Naive thymus-derived CD4-positive, alpha-beta T cell (primary cell): ENCODE measurements at regions of chr19 and their contacts with region 1.

Region 1: DNA sequence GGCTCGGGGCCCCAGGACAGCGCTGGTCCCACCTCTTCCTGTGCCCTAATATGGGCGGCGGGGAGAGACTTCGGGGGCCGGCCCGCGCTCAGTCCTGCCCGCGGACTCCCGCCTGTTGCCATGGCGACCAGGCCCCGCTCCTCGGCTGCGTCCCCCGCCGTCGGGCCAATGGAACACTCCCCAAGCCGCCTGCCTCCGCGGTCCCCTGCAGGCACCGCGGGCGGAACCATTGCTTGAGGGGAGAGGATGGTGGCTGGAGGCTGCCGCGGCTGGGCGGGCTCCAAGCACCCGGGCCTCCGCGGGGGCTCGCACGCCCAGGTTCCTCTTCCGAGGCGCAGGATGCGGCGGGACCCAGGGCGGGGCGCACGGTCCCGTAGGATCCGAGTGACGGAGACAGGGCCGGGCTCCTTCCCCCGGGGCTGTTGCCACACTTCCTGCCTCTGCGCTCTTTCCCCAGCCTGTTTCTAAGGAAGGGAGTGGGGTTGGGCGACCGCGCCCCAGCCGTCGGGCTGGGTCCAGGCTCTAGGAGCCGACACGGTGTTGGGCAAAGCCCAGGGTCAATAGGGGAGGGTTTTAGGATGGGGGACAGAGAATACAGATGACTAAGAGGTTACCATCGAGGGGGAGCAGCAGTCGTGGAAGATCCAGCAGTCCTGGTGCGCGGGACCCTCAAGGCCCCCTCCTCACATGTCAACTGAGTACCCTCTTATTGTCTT is 1.2 kb upstream of the JUNB start:
- DNase-seq: peak; percentile 80 to 97 (median 83)
- ATAC-seq: peak; percentile 48
- H3K4me3 ChIP-seq: peak overlapping the region; percentile 98
- H3K4me3 Mint-ChIP-seq: peak overlapping the region; percentile 89 to 98 (median 94)
- H3K27ac ChIP-seq: peak overlapping the region; percentile 99
- H3K27ac Mint-ChIP-seq: peak overlapping the region; percentile 97 to 100 (median 100)
- H3K4me1 ChIP-seq: peaks cover 42% of the 10 kb centered on the region in 2 donors
- H3K4me1 Mint-ChIP-seq: peaks cover 19 to 37% (median 30%) of the 10 kb centered on the region in 7 donors
- H3K27me3 ChIP-seq: no peaks in the 10 kb centered on the region
- H3K27me3 Mint-ChIP-seq: peaks cover 0 to 2% (median 0%) of the 10 kb centered on the region in 5 donors

Region 2: DNA sequence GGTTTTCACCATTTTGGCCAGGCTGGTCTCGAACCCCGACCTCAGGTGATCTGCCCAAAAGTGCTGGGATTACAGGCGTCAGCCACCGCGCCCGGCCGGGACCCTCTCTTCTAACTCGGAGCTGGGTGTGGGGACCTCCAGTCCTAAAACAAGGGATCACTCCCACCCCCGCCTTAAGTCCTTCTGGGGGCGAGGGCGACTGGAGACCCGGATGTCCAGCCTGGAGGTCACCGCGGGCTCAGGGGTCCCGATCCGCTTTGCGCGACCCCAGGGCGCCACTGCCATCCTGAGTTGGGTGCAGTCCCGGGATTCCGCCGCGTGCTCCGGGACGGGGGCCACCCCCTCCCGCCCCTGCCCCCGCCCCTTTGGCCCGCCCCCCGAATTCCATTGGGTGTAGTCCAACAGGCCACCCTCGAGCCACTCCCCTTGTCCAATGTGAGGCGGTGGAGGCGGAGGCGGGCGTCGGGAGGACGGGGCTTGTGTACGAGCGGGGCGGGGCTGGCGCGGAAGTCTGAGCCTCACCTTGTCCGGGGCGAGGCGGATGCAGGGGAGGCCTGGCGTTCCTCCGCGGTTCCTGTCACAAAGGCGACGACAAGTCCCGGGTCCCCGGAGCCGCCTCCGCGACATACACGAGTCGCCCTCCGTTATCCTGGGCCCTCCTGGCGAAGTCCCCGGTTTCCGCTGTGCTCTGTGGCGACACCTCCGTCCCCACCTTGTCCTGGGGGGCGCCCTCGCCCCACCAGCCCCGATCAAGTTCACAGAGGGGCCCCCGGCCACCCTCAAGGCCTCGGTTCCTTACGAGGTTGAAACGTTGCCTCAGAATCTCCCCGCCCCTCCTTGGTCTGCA is 1699.8 kb before region 1 on chr19:
- CTCF ChIA-PET with region 1: no interaction called
- POLR2A ChIA-PET with region 1: no interaction called
- intact Hi-C with region 1: loop called in 1 of 2 experiments (anchors 5 kb)
- DNase-seq: peak; percentile 89 to 97 (median 96)
- ATAC-seq: peak; percentile 90
- H3K4me3 ChIP-seq: peak overlapping the region; percentile 83
- H3K4me3 Mint-ChIP-seq: peak overlapping the region; percentile 85 to 94 (median 89)
- H3K27ac ChIP-seq: peak overlapping the region; percentile 91
- H3K27ac Mint-ChIP-seq: peak overlapping the region; percentile 88 to 99 (median 96)
- H3K4me1 ChIP-seq: peaks cover 24 to 41% of the 10 kb centered on the region in 2 donors
- H3K4me1 Mint-ChIP-seq: peaks cover 13 to 51% (median 44%) of the 10 kb centered on the region in 7 donors
- H3K27me3 ChIP-seq: no peaks in the 10 kb centered on the region
- H3K27me3 Mint-ChIP-seq: peaks cover 0 to 2% (median 0%) of the 10 kb centered on the region in 5 donors

Region 3: DNA sequence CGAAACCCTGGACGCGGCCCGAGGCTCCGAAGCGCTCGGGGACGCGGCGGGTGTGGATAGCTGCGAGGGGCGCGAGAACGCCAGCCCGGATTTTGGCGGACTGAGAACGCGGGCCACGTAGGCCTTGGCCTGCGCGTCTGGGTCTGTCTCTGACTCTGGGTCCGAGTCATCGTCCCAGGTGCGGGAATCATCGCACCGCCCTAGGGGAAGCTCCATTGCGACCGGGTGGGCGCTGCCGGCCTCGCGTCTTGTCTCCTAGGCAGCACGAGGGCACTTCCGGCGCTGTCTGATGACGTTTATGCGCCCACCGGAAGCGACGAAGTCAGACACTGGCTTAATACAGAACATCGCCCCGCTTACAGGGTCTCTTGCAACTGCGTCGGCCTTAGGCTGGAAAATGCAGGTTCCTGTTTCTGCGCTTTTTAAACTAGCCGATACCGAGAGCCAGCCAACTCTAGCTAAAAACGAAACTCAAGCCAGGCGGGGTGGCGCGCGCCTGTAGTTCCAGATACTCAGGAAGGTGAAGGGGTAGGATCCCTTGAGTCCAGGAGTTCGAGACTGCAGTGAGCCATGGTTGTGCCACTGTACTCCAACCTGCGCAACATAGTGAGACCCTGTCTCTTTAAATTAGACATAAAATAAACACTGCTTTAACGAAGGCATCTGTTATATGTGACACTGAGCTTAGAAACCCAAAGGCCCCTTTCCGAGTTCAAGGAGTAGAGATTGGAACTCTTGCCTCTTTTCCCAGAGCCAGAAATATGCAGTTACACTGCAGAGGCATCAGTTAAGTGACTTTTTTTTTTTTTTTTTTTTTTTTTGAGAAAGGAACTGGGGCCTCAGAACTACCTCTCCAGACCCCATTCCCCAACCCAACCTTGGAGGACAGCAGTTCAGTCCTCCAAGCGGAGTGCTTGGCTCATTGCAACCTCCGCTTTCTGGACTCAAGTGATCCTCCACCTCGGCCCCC is 93.4 kb before region 1 on chr19 and contains the start of gene FBXW9:
- CTCF ChIA-PET with region 1: no interaction called
- POLR2A ChIA-PET with region 1: interaction called, 12 read pairs
- intact Hi-C with region 1: no loop called
- DNase-seq: peak; percentile 88 to 97 (median 95)
- ATAC-seq: peak; percentile 97
- H3K4me3 ChIP-seq: peak within 1 kb of the TSS; percentile 98
- H3K4me3 Mint-ChIP-seq: peak within 1 kb of the TSS; percentile 86 to 95 (median 91)
- H3K27ac ChIP-seq: peak within 1 kb of the TSS; percentile 82
- H3K27ac Mint-ChIP-seq: peak within 1 kb of the TSS; percentile 90 to 97 (median 97)
- H3K4me1 ChIP-seq: peaks cover 9 to 11% of the 10 kb centered on the region in 2 donors
- H3K4me1 Mint-ChIP-seq: peaks cover 0 to 15% (median 12%) of the 10 kb centered on the region in 7 donors
- H3K27me3 ChIP-seq: no peaks in the 10 kb centered on the region
- H3K27me3 Mint-ChIP-seq: no peaks in the 10 kb centered on the region
- total RNA-seq, gene FBXW9: 2.5 to 8.6 (median 4.3) TPM

Region 4: GRCh38 chr19:12749938-12750521 is 40.0 kb before region 1 on chr19:
- CTCF ChIA-PET with region 1: no interaction called
- POLR2A ChIA-PET with region 1: no interaction called
- intact Hi-C with region 1: no loop called
- DNase-seq: no peak
- ATAC-seq: no peak
- H3K4me3 ChIP-seq: no peak overlapping the region
- H3K4me3 Mint-ChIP-seq: peak overlapping the region in 3 of 10 donors; percentile 2 to 48 (median 21)
- H3K27ac ChIP-seq: no peak overlapping the region
- H3K27ac Mint-ChIP-seq: no peak overlapping the region
- H3K4me1 ChIP-seq: no peaks in the 10 kb centered on the region
- H3K4me1 Mint-ChIP-seq: peaks cover 0 to 13% (median 4%) of the 10 kb centered on the region in 7 donors
- H3K27me3 ChIP-seq: no peaks in the 10 kb centered on the region
- H3K27me3 Mint-ChIP-seq: peaks cover 10 to 32% (median 21%) of the 10 kb centered on the region in 5 donors

Region 5: DNA sequence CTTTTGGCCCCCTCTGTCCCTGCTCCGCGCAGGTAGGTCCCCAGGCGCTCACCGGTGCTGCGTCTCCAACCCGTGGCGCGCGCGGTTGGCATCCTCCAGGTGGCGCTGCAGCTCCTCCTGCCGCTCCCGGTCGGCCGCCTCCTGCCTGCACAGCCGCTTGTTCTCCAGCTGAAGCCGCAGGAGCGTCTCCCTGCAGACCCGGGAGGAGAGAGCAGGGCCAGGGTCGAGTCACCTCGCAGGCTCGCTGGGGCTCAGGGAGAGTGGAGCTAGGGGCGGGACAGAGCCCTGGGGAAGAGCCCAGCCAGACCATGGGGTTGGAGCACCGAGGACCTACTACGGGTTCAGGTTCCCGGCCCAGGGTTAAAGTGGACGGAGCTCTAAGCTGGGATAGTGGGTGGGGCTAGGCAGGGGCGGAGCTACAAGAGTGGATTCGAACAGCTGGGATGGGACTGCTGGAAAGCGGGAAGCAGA is 24.0 kb before region 1 on chr19:
- CTCF ChIA-PET with region 1: interaction called, 111 read pairs
- POLR2A ChIA-PET with region 1: interaction called, 29 read pairs
- intact Hi-C with region 1: no loop called
- DNase-seq: peak in 8 of 9 donors; percentile 64 to 89 (median 72)
- ATAC-seq: peak; percentile 92
- H3K4me3 ChIP-seq: no peak overlapping the region
- H3K4me3 Mint-ChIP-seq: peak overlapping the region in 3 of 10 donors; percentile 7 to 60 (median 44)
- H3K27ac ChIP-seq: no peak overlapping the region
- H3K27ac Mint-ChIP-seq: no peak overlapping the region
- H3K4me1 ChIP-seq: no peaks in the 10 kb centered on the region
- H3K4me1 Mint-ChIP-seq: peaks cover 0 to 9% (median 0%) of the 10 kb centered on the region in 7 donors
- H3K27me3 ChIP-seq: no peaks in the 10 kb centered on the region
- H3K27me3 Mint-ChIP-seq: no peaks in the 10 kb centered on the region

Region 6: GRCh38 chr19:12825254-12826131 is 35.4 kb after region 1 on chr19:
- CTCF ChIA-PET with region 1: no interaction called
- POLR2A ChIA-PET with region 1: no interaction called
- intact Hi-C with region 1: no loop called
- DNase-seq: no peak
- ATAC-seq: peak; percentile 45
- H3K4me3 ChIP-seq: no peak overlapping the region
- H3K4me3 Mint-ChIP-seq: peak overlapping the region in 6 of 10 donors; percentile 8 to 60 (median 44)
- H3K27ac ChIP-seq: no peak overlapping the region
- H3K27ac Mint-ChIP-seq: peak overlapping the region in 1 of 9 donors; percentile 25
- H3K4me1 ChIP-seq: no peaks in the 10 kb centered on the region
- H3K4me1 Mint-ChIP-seq: peaks cover 4 to 13% (median 9%) of the 10 kb centered on the region in 7 donors
- H3K27me3 ChIP-seq: peaks cover 0 to 18% of the 10 kb centered on the region in 2 donors
- H3K27me3 Mint-ChIP-seq: peaks cover 39 to 57% (median 50%) of the 10 kb centered on the region in 5 donors

Region 7: DNA sequence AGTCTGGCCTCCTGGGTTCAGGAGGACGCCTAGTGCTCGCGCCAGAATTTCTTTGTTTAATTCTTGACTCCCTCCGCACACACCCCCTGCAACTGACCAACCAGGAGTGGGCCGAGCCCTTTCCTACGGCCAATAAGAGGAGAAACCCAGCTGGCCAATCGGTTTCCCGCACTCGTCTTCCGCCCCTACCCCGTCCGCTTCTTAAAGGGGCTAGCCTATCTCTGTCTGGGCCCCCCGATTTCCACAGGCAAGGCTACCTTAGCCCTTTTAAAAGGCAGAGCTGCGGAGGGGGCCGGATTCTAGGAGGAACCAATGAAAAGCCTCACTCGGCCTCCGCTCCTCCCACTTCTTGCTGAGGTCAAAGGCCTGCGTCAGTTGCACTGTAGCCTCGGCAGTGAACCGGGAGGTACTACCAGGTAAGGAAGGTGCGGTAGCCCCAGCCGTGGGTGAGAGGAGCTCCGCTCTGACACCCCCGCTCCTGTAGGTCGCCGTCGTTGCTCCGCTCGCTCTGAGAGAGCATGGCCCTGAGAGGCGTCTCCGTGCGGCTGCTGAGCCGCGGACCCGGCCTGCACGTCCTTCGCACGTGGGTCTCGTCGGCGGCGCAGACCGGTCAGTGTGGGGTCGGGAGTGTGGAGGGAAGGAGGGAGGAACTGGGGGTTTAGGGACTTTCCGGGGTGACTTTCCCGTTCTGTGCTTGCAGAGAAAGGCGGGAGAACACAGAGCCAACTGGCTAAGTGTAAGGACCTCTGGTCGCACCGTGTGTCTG is 100.9 kb after region 1 on chr19 and contains the start of gene GCDH:
- CTCF ChIA-PET with region 1: no interaction called
- POLR2A ChIA-PET with region 1: interaction called, 15 read pairs
- intact Hi-C with region 1: no loop called
- DNase-seq: peak; percentile 77 to 98 (median 96)
- ATAC-seq: peak; percentile 97
- H3K4me3 ChIP-seq: peak within 1 kb of the TSS; percentile 87
- H3K4me3 Mint-ChIP-seq: peak within 1 kb of the TSS; percentile 91 to 100 (median 99)
- H3K27ac ChIP-seq: peak within 1 kb of the TSS; percentile 83
- H3K27ac Mint-ChIP-seq: peak within 1 kb of the TSS; percentile 94 to 99 (median 98)
- H3K4me1 ChIP-seq: peaks cover 5 to 15% of the 10 kb centered on the region in 2 donors
- H3K4me1 Mint-ChIP-seq: peaks cover 16 to 41% (median 30%) of the 10 kb centered on the region in 7 donors
- H3K27me3 ChIP-seq: no peaks in the 10 kb centered on the region
- H3K27me3 Mint-ChIP-seq: peaks cover 0 to 6% (median 0%) of the 10 kb centered on the region in 5 donors
- total RNA-seq, gene GCDH: 40.1 to 74.2 (median 54.5) TPM

Region 8: DNA sequence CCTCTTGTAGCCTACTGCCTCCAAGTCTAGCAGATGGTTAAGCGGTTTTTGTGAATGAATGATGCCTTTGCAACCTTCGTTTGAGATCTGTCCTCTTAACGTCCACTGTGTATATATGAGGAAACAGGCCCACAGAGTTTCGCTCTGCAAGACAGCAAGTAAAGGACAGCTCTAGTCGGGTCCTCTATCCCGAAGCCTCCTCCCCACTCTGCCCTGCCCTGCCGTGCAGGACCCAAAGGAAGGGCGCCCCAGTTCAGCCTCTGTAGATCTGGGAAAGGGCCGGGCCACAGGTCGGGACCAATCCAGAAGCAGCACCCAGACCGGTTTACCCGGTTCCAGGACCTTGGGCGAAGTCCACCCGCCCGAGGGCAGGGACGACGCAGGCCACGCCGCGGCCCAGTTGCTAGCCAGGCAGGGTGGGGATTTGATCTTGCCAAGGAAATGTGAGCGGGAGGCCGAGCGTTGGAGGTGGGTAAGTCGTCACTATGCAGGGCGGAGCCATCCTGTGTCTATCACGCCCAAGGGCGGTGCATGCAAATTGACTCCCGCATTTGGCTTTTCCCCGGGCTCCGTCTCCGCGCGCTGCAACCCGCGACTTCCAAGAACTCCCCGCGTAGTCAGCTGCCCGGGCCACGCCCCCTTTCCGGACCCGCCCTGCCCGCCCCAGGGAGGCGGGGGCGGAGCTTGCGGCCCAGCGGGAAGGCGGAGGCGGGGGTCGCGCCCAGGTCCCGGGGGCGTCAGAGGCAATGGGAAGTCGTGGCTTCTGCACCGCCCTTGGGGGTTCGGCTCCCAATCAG is 372.7 kb after region 1 on chr19:
- CTCF ChIA-PET with region 1: no interaction called
- POLR2A ChIA-PET with region 1: interaction called, 9 read pairs
- intact Hi-C with region 1: loop called in 1 of 2 experiments (anchors 5 kb)
- DNase-seq: peak; percentile 46 to 91 (median 75)
- ATAC-seq: peak; percentile 73
- H3K4me3 ChIP-seq: peak overlapping the region; percentile 60
- H3K4me3 Mint-ChIP-seq: peak overlapping the region; percentile 85 to 94 (median 90)
- H3K27ac ChIP-seq: peak overlapping the region; percentile 90
- H3K27ac Mint-ChIP-seq: peak overlapping the region; percentile 92 to 99 (median 97)
- H3K4me1 ChIP-seq: peaks cover 54 to 73% of the 10 kb centered on the region in 2 donors
- H3K4me1 Mint-ChIP-seq: peaks cover 26 to 87% (median 67%) of the 10 kb centered on the region in 7 donors
- H3K27me3 ChIP-seq: no peaks in the 10 kb centered on the region
- H3K27me3 Mint-ChIP-seq: no peaks in the 10 kb centered on the region

Region 9: DNA sequence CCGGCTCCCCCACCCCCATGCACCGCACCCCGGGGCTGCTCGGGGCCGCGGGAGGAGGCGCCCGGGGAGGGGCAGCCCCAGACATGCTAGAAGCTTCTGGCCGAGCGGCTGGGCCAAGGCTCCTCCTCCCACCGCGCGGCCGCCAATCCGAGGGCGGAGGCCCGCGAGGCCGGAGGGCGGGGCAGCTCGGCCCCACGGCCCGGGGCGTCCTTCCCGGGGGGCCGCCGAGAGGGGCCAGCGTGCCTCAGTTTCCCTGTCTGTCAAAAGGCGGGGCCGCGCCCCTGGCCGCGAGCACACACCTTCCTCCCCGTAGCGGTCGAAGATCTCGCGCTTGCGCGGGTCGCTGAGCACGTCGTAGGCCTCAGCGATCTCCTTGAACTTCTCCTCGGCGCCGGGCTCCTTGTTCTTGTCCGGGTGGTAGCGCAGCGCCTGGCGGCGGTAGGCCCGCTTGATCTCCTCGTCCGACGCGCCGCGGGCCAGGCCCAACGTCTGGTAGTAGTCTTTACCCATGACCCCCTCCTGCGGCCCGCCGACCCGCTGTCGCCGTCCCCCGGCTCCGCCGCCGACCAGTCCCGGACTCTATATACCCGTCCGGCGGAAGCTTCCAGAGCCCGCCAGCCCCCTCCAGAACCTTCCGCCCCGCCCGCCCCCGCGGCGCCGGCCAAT is 1727.9 kb after region 1 on chr19 and contains the start of gene DNAJB1:
- CTCF ChIA-PET with region 1: no interaction called
- POLR2A ChIA-PET with region 1: interaction called, 4 read pairs
- intact Hi-C with region 1: loop called in 1 of 2 experiments (anchors 1 kb)
- DNase-seq: peak in 2 of 9 donors; percentile 53 to 86
- ATAC-seq: peak; percentile 33
- H3K4me3 ChIP-seq: peak within 1 kb of the TSS; percentile 73
- H3K4me3 Mint-ChIP-seq: peak within 1 kb of the TSS; percentile 93 to 99 (median 96)
- H3K27ac ChIP-seq: peak within 1 kb of the TSS; percentile 97
- H3K27ac Mint-ChIP-seq: peak within 1 kb of the TSS; percentile 92 to 100 (median 98)
- H3K4me1 ChIP-seq: peaks cover 57 to 64% of the 10 kb centered on the region in 2 donors
- H3K4me1 Mint-ChIP-seq: peaks cover 42 to 80% (median 72%) of the 10 kb centered on the region in 7 donors
- H3K27me3 ChIP-seq: no peaks in the 10 kb centered on the region
- H3K27me3 Mint-ChIP-seq: peaks cover 0 to 2% (median 0%) of the 10 kb centered on the region in 5 donors
- total RNA-seq, gene DNAJB1: 87.4 to 574 (median 177) TPM